ENCODE measurements at regions of chr7 and their contacts with region 1.

Region 1: GRCh38 chr7:151759591-151760042 is 117.3 kb downstream of the PRKAG2 start:
- DNase-seq: peak; percentile 82 to 85
- H3K4me3 ChIP-seq: no peak overlapping the region
- H3K4me3 Mint-ChIP-seq: no peak overlapping the region
- H3K27ac Mint-ChIP-seq: peak overlapping the region; percentile 37
- H3K4me1 ChIP-seq: peaks cover 18% of the 10 kb centered on the region
- H3K4me1 Mint-ChIP-seq: peaks cover 15% of the 10 kb centered on the region
- H3K27me3 ChIP-seq: no peaks in the 10 kb centered on the region
- H3K27me3 Mint-ChIP-seq: no peaks in the 10 kb centered on the region
- CTCF ChIP-seq: peak; percentile 91 to 94

Region 2: GRCh38 chr7:151570366-151570915 is 189.2 kb before region 1 on chr7:
- CTCF ChIA-PET with region 1: no interaction called
- POLR2A ChIA-PET with region 1: no interaction called
- intact Hi-C with region 1: loop called (anchors 1 kb)
- DNase-seq: no peak
- H3K4me3 ChIP-seq: no peak overlapping the region
- H3K4me3 Mint-ChIP-seq: no peak overlapping the region
- H3K27ac Mint-ChIP-seq: no peak overlapping the region
- H3K4me1 ChIP-seq: no peaks in the 10 kb centered on the region
- H3K4me1 Mint-ChIP-seq: no peaks in the 10 kb centered on the region
- H3K27me3 ChIP-seq: no peaks in the 10 kb centered on the region
- H3K27me3 Mint-ChIP-seq: no peaks in the 10 kb centered on the region
- CTCF ChIP-seq: peak; percentile 14 to 26

Region 3: DNA sequence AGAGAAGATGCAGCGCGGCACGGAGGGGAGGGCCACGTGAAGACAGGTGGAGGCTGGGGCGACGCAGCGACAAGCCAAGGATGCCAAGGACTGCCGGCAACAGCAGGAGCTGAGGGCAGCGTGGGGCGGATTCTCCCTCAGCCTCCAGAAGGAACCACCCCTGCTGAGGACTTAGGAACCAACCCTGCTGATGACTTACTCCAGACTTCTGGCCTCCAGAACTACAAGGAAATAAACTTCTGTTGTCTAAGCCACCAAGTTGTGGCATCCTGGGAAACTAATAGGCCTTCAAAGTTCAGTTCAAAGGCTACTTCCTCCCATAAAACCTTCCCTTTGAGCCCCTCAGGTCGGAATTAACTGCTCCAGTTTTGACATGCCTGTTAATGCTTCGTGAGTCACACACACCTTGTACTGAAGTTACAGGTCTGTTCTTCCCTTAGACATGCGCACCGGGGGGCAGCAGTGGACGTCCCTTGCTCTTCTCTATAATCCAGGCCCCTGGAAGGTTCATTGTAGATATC is 151.5 kb before region 1 on chr7:
- CTCF ChIA-PET with region 1: no interaction called
- POLR2A ChIA-PET with region 1: no interaction called
- intact Hi-C with region 1: loop called (anchors 2 kb)
- DNase-seq: peak; percentile 59 to 71
- H3K4me3 ChIP-seq: no peak overlapping the region
- H3K4me3 Mint-ChIP-seq: no peak overlapping the region
- H3K27ac Mint-ChIP-seq: no peak overlapping the region
- H3K4me1 ChIP-seq: 0 out of 2 replicates have a peak, but pooled peaks cover 5% of the 10 kb centered on the region
- H3K4me1 Mint-ChIP-seq: no peaks in the 10 kb centered on the region
- H3K27me3 ChIP-seq: no peaks in the 10 kb centered on the region
- H3K27me3 Mint-ChIP-seq: no peaks in the 10 kb centered on the region
- CTCF ChIP-seq: peak; percentile 13 to 32

Region 4: DNA sequence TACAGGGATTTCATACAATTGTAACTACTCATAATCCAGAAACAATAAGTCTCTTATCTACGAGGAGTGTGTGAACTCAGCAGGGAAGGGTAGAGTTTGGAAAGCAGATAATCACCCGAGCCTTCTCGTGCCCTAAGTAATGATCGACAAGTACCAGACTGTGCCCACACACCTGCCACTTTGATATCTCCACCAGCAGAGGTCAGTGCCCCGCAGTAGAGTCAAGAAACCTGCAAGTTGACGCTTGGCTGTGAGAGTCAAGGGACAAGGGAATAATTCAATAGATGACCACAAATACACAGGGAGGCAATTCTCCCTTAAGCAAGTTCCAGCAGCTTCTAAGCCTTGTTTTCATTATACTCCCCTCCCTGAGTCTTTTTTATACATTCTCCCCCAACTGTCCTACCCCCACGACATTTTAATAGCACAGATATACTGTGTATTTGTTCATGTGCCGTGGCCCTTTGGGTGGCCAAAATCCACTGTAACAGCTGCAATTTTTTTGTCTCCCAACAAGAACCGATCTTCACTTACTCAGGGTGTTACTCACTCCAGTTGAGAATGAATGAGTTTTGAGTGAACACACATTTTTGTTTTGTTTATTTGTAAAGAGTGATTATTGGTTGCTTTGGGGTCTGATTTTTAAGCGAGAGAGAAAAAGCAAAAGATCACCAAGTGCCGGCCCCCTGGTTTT is 133.0 kb before region 1 on chr7:
- CTCF ChIA-PET with region 1: interaction called, 3 read pairs
- POLR2A ChIA-PET with region 1: no interaction called
- intact Hi-C with region 1: loop called (anchors 1 kb)
- DNase-seq: peak; percentile 51 to 55
- H3K4me3 ChIP-seq: no peak overlapping the region
- H3K4me3 Mint-ChIP-seq: no peak overlapping the region
- H3K27ac Mint-ChIP-seq: no peak overlapping the region
- H3K4me1 ChIP-seq: peaks cover 11% of the 10 kb centered on the region
- H3K4me1 Mint-ChIP-seq: peaks cover 6% of the 10 kb centered on the region
- H3K27me3 ChIP-seq: no peaks in the 10 kb centered on the region
- H3K27me3 Mint-ChIP-seq: no peaks in the 10 kb centered on the region
- CTCF ChIP-seq: peak; percentile 39 to 63

Region 5: GRCh38 chr7:151717415-151717814 is 42.2 kb before region 1 on chr7:
- CTCF ChIA-PET with region 1: no interaction called
- POLR2A ChIA-PET with region 1: no interaction called
- intact Hi-C with region 1: no loop called
- DNase-seq: no peak
- H3K4me3 ChIP-seq: no peak overlapping the region
- H3K4me3 Mint-ChIP-seq: no peak overlapping the region
- H3K27ac Mint-ChIP-seq: no peak overlapping the region
- H3K4me1 ChIP-seq: peaks cover 9% of the 10 kb centered on the region
- H3K4me1 Mint-ChIP-seq: peaks cover 21% of the 10 kb centered on the region
- H3K27me3 ChIP-seq: no peaks in the 10 kb centered on the region
- H3K27me3 Mint-ChIP-seq: no peaks in the 10 kb centered on the region
- CTCF ChIP-seq: no peak

Measured in Caco-2 (cell line).